Heart left ventricle (tissue), 16 donors: ENCODE measurements at regions of chr5 and their contacts with region 1.

Region 1: DNA sequence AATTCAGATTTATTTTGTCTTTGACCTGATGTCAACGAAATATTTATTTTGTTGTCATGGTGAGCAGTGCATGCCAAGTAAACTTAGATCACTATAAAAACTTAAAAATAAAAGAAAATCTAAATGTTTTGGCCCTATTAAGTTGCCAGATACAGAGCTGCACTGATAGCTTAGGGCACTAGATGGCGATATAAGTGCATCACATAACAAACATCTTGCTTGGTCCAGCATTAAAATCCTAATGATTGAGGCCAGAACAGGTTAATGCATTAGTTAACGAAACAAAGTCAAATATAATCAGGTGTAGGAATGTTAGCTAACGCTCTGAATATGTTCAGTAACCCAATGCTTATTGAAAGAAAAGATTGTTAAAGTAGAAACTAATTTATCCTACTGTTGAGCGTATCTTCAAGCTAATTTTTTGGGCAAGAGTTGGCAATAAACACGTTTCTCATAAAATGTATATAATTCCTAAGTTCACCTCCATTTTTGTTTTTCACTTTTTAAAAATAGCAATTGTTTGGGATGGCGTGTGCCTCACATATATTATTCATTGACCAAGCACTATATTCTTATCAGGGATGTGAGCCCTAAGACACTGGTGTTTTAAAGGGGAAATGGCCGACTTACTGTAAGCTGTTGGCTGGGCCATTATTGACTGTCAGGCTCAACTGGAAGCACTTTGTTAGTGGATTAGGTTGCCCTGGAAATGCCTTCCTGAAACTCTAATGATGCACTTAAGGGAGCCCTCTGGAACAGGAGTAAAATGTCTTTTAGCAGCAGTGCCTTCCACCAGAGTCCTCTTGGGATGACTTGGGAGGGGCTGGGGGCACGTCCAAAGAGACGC is 33.3 kb downstream of the KCTD16 start:
- DNase-seq: no peak
- ATAC-seq: peak in 3 of 4 donors; percentile 52 to 74 (median 56)
- H3K4me3 ChIP-seq: no peak overlapping the region
- H3K27ac ChIP-seq: no peak overlapping the region
- H3K4me1 ChIP-seq: peaks cover 0 to 16% (median 5%) of the 10 kb centered on the region in 12 donors
- H3K27me3 ChIP-seq: peaks cover 9 to 71% (median 36%) of the 10 kb centered on the region in 9 donors
- CTCF ChIP-seq: peak; percentile 76 to 97 (median 87)
- POLR2A ChIP-seq: no peak

Region 2: DNA sequence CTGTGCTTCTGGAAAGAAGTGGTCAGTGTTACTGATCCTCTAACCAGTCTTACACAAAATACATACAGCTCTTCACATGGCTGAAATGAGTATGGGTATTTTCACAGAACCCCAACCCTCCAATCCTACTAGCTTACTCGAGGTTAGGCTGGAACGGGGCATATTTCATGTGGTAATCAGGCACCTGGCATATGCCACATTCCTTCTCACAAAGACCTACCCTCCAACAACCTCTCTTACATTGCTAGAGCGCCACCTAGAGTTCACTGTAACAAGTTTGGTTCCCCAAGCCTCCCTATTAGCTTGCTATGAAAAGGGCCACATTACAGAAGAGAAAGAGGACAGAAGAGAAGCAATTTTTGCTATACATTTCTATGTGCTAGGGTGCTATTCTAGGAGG is 1033.9 kb after region 1 on chr5:
- intact Hi-C with region 1: loop called in 1 of 10 experiments (anchors 10 kb)
- DNase-seq: no peak
- ATAC-seq: no peak
- H3K4me3 ChIP-seq: no peak overlapping the region
- H3K27ac ChIP-seq: no peak overlapping the region
- H3K4me1 ChIP-seq: no peaks in the 10 kb centered on the region
- H3K27me3 ChIP-seq: no peaks in the 10 kb centered on the region
- CTCF ChIP-seq: peak in 6 of 12 donors; percentile 12 to 29 (median 22)
- POLR2A ChIP-seq: no peak

Region 3: GRCh38 chr5:145681686-145682085 is 1477.7 kb after region 1 on chr5:
- intact Hi-C with region 1: loop called in 1 of 10 experiments (anchors 10 kb)
- DNase-seq: peak in 4 of 5 donors; percentile 24 to 43 (median 26)
- ATAC-seq: peak; percentile 70 to 93 (median 83)
- H3K4me3 ChIP-seq: no peak overlapping the region
- H3K27ac ChIP-seq: peak overlapping the region in 1 of 12 donors; percentile 73
- H3K4me1 ChIP-seq: peaks cover 0 to 22% (median 4%) of the 10 kb centered on the region in 12 donors
- H3K27me3 ChIP-seq: no peaks in the 10 kb centered on the region
- CTCF ChIP-seq: peak; percentile 38 to 74 (median 61)
- POLR2A ChIP-seq: no peak

Region 4: DNA sequence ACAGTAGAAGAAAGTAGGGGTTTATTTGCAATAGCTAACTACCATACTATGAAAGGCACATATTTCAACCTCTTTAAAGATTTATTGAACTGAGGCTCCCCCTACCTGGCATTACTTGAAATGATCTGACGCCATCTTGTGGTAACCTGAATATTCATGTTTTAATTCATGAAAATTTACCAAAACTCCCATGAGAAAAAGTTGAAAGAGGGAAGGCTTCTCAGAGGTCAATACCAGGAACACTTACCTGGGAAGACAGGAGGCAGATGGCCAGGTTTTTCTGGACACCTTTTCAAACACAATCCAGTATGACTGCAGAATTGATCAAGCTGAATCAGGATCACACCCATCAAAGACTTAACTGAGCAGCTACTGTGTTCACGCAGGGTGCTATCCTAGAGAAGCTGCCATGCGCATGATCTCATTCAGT is 1621.8 kb after region 1 on chr5:
- intact Hi-C with region 1: loop called in 9 of 10 experiments (anchors 2 to 10 kb)
- DNase-seq: no peak
- ATAC-seq: peak in 1 of 4 donors; percentile 50
- H3K4me3 ChIP-seq: no peak overlapping the region
- H3K27ac ChIP-seq: no peak overlapping the region
- H3K4me1 ChIP-seq: peaks cover 0 to 8% (median 5%) of the 10 kb centered on the region in 12 donors
- H3K27me3 ChIP-seq: no peaks in the 10 kb centered on the region
- CTCF ChIP-seq: peak; percentile 53 to 87 (median 69)
- POLR2A ChIP-seq: no peak

Region 5: DNA sequence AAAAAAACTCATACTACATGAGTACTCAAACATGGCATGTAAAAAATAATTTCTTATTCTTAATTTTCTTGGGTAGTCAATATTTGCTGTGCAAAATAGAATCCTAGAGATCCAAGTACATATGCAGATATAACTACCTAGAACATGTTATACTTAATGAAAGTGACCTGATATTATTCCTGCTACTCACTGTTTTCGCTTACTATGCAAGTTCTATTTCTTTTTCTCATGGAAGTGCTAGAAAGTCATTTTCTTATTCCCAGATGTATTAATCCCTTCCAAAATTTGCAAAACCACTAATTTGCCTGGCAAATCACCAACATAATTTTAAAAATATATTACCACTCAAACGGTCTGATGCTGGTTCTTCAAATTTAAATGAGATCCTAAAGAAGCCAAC is 1920.6 kb after region 1 on chr5:
- intact Hi-C with region 1: loop called in 2 of 10 experiments (anchors 10 kb)
- DNase-seq: no peak
- ATAC-seq: no peak
- H3K4me3 ChIP-seq: no peak overlapping the region
- H3K27ac ChIP-seq: no peak overlapping the region
- H3K4me1 ChIP-seq: no peaks in the 10 kb centered on the region
- H3K27me3 ChIP-seq: no peaks in the 10 kb centered on the region
- CTCF ChIP-seq: no peak
- POLR2A ChIP-seq: no peak